ENCODE measurements at regions of chr17 and their contacts with region 1.

Region 1: DNA sequence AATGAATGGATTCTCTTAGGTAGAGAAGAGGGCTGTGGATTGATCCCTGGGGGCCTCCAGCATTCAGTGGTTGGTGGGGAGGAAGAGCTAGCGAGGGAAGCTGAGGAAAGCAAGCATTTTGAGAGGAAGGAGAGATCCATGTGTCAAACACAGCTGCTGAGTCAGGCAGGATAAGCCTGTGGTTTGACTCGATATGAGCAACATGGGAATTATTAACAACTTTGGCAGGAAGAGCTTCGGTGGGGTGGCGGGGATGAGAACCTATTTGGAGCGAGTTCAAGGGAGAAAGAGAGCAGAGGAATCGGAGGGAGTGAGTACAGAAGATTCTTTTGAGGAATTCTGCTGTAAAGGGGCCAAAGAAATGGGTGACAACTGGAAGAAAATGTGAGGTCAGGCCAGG is 59.5 kb upstream of the CDC42EP4 start:
- DNase-seq: peak; percentile 6 to 22 (median 18)
- H3K4me3 ChIP-seq: no peak overlapping the region
- H3K27ac ChIP-seq: no peak overlapping the region
- H3K4me1 ChIP-seq: peaks cover 0 to 14% (median 7%) of the 10 kb centered on the region in 4 experiments
- H3K27me3 ChIP-seq: peaks cover 0 to 2% (median 0%) of the 10 kb centered on the region in 5 experiments

Region 2: GRCh38 chr17:73247726-73248125 is 123.6 kb before region 1 on chr17:
- CTCF ChIA-PET with region 1: interaction called, 133 read pairs
- POLR2A ChIA-PET with region 1: interaction called, 3 read pairs
- DNase-seq: no peak
- H3K4me3 ChIP-seq: no peak overlapping the region
- H3K27ac ChIP-seq: no peak overlapping the region
- H3K4me1 ChIP-seq: no peaks in the 10 kb centered on the region
- H3K27me3 ChIP-seq: no peaks in the 10 kb centered on the region

Region 3: GRCh38 chr17:73255671-73256181 is 115.6 kb before region 1 on chr17:
- CTCF ChIA-PET with region 1: interaction called, 133 read pairs
- POLR2A ChIA-PET with region 1: no interaction called
- DNase-seq: peak; percentile 39 to 55 (median 51)
- H3K4me3 ChIP-seq: no peak overlapping the region
- H3K27ac ChIP-seq: no peak overlapping the region
- H3K4me1 ChIP-seq: no peaks in the 10 kb centered on the region
- H3K27me3 ChIP-seq: no peaks in the 10 kb centered on the region

Region 4: GRCh38 chr17:73261952-73262675 is 109.2 kb before region 1 on chr17:
- CTCF ChIA-PET with region 1: interaction called, 133 read pairs
- POLR2A ChIA-PET with region 1: no interaction called
- DNase-seq: no peak
- H3K4me3 ChIP-seq: no peak overlapping the region
- H3K27ac ChIP-seq: no peak overlapping the region
- H3K4me1 ChIP-seq: no peaks in the 10 kb centered on the region
- H3K27me3 ChIP-seq: no peaks in the 10 kb centered on the region

Region 5: GRCh38 chr17:73281928-73282327 is 89.4 kb before region 1 on chr17:
- CTCF ChIA-PET with region 1: interaction called, 11 read pairs
- POLR2A ChIA-PET with region 1: no interaction called
- DNase-seq: no peak
- H3K4me3 ChIP-seq: no peak overlapping the region
- H3K27ac ChIP-seq: no peak overlapping the region
- H3K4me1 ChIP-seq: peaks cover 0 to 5% (median 0%) of the 10 kb centered on the region in 4 experiments
- H3K27me3 ChIP-seq: peaks cover 0 to 2% (median 0%) of the 10 kb centered on the region in 5 experiments